ENCODE measurements at regions of chr13 and their contacts with region 1.

Region 1: DNA sequence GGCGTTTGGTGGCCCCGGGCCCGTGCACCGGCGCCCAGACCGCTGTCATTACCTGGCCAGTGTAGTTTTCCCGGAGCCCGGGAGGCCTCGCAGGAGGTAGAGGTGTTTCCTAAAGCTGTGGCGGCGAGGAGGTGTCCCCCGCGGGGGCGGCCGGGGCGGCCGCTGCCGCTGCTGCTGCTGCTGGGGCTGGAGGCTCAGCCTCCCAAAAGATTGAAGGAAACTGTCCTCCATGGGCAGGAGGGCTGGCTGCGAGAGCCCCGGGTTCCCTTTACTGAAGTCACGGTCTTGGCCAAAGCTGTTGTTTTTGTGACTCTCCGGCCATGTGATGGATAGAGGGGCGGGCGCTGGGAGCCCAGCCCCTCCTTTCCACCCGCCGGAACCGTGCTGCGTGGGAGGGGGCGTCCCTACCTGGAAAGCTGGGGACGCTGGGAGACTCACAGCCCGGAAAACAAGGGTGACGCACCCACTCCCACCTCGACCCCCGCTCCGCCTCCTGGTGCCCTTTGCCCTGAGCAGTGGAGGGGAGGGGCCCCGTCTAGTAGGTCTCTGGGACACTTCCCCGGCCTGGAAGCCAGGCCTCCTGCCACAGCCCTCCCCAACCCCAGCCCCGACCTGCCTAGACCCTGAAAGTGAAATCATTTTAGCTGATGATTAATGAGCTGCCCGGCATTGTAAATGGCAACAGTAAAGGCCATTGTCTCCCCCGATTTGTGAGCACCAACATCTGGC is at the start of gene N4BP2L1:
- DNase-seq: peak; percentile 72 to 79
- ATAC-seq: peak; percentile 79 to 89 (median 88)
- H3K4me3 ChIP-seq: peak within 1 kb of the TSS; percentile 26 to 84 (median 77)
- H3K27ac ChIP-seq: peak within 1 kb of the TSS; percentile 82 to 97 (median 86)
- H3K4me1 ChIP-seq: peaks cover 0 to 59% (median 26%) of the 10 kb centered on the region in 9 donors
- H3K27me3 ChIP-seq: no peaks in the 10 kb centered on the region
- CTCF ChIP-seq: no peak
- total RNA-seq, gene N4BP2L1: 2.5 to 10.6 (median 4.0) TPM

Region 2: GRCh38 chr13:31587698-31588266 is 840.2 kb before region 1 on chr13:
- intact Hi-C with region 1: no loop called
- DNase-seq: no peak
- ATAC-seq: no peak
- H3K4me3 ChIP-seq: no peak overlapping the region
- H3K27ac ChIP-seq: no peak overlapping the region
- H3K4me1 ChIP-seq: no peaks in the 10 kb centered on the region
- H3K27me3 ChIP-seq: peaks cover 0 to 3% (median 0%) of the 10 kb centered on the region in 7 donors
- CTCF ChIP-seq: no peak

Region 3: GRCh38 chr13:32080328-32080744 is 347.7 kb before region 1 on chr13:
- intact Hi-C with region 1: no loop called
- DNase-seq: no peak
- ATAC-seq: peak in 2 of 8 donors; percentile 21 to 59
- H3K4me3 ChIP-seq: no peak overlapping the region
- H3K27ac ChIP-seq: peak overlapping the region in 4 of 10 donors; percentile 4 to 48 (median 14)
- H3K4me1 ChIP-seq: peaks cover 0 to 83% (median 35%) of the 10 kb centered on the region in 9 donors
- H3K27me3 ChIP-seq: no peaks in the 10 kb centered on the region
- CTCF ChIP-seq: no peak

Region 4: GRCh38 chr13:32323912-32324311 is 104.1 kb before region 1 on chr13:
- intact Hi-C with region 1: loop called in 1 of 10 experiments (anchors 10 kb)
- DNase-seq: no peak
- ATAC-seq: no peak
- H3K4me3 ChIP-seq: no peak overlapping the region
- H3K27ac ChIP-seq: no peak overlapping the region
- H3K4me1 ChIP-seq: no peaks in the 10 kb centered on the region
- H3K27me3 ChIP-seq: no peaks in the 10 kb centered on the region
- CTCF ChIP-seq: no peak

Region 5: DNA sequence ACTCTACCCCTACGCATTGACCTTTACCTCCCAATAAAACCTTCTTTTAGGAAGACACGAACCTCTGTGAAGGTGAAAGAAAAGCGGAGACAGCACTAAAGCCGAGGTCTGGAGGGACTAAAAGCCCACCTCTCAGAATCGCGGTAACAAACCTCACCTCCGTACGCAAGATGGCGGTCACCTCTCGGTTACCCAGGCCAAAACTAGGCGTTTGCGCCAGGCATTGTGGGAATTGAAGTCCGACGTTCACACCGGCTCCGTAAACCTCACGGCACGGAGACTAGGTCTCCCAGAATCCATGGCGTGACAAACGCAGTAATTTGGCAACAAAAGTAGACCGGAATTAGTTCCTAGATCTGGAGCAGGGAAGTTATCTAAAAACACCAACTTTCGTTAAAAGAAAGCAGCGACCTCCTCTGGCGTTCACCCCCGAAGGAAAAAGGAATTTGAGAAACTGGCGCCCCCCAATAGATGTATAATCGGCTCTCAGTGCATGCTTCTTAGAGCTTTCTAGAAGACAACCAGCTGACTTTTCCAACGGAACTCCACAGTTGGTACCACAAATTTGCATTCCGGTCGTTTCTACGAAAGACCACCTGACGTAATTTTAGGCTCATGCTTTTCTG is 110.7 kb after region 1 on chr13 and contains the start of gene N4BP2L2:
- intact Hi-C with region 1: loop called in 5 of 10 experiments (anchors 2 to 10 kb)
- DNase-seq: peak; percentile 87 to 97
- ATAC-seq: peak; percentile 97 to 99 (median 99)
- H3K4me3 ChIP-seq: peak within 1 kb of the TSS; percentile 59 to 93 (median 74)
- H3K27ac ChIP-seq: peak within 1 kb of the TSS; percentile 65 to 98 (median 92)
- H3K4me1 ChIP-seq: peaks cover 4 to 46% (median 40%) of the 10 kb centered on the region in 9 donors
- H3K27me3 ChIP-seq: no peaks in the 10 kb centered on the region
- CTCF ChIP-seq: peak in 6 of 9 donors; percentile 27 to 66 (median 60)
- total RNA-seq, gene N4BP2L2: 113 to 162 (median 134) TPM

Measured in heart right ventricle (tissue), 16 donors.